AG04450 (cell line): ENCODE measurements at regions of chr12 and their contacts with region 1.

Region 1: DNA sequence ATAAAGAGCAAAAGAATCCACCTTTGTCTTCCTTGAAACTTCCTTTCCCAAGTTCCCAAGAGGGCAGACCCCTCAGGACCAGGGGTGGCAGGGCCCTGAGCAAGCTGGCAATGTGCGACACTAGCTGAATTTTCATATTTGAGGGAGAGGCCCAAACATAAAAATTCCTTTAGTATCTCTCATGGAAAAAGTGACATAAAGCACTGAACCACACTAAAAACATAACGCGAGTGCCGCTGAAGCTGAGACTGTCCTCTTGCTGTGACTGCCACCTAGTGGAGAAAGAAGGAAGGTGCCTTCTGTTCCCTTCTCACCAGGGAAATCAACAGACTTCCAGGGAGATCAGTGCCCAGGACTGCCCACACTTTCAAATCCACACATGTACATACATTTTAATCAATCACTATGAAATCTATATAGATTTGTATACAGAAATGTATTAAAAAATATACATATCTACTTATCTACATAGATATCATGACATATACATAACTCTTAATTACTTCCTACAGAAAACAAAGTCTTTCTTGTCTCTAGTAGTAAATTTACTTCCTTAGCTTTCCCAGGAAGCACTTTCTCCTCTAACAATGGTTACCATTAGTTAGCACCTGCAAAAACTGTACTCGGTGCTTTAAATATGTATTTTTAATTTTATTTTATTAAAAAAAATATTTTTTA is 53.8 kb downstream of the SSH1 start:
- DNase-seq: peak; percentile 85
- H3K4me3 ChIP-seq: no peak overlapping the region
- H3K27ac ChIP-seq: peak overlapping the region; percentile 99
- H3K27me3 ChIP-seq: no peaks in the 10 kb centered on the region
- CTCF ChIP-seq: peak; percentile 96

Region 2: GRCh38 chr12:108241986-108242703 is 561.4 kb before region 1 on chr12:
- CTCF ChIA-PET with region 1: no interaction called
- POLR2A ChIA-PET with region 1: no interaction called
- DNase-seq: no peak
- H3K4me3 ChIP-seq: no peak overlapping the region
- H3K27ac ChIP-seq: no peak overlapping the region
- H3K27me3 ChIP-seq: no peaks in the 10 kb centered on the region
- CTCF ChIP-seq: no peak

Region 3: DNA sequence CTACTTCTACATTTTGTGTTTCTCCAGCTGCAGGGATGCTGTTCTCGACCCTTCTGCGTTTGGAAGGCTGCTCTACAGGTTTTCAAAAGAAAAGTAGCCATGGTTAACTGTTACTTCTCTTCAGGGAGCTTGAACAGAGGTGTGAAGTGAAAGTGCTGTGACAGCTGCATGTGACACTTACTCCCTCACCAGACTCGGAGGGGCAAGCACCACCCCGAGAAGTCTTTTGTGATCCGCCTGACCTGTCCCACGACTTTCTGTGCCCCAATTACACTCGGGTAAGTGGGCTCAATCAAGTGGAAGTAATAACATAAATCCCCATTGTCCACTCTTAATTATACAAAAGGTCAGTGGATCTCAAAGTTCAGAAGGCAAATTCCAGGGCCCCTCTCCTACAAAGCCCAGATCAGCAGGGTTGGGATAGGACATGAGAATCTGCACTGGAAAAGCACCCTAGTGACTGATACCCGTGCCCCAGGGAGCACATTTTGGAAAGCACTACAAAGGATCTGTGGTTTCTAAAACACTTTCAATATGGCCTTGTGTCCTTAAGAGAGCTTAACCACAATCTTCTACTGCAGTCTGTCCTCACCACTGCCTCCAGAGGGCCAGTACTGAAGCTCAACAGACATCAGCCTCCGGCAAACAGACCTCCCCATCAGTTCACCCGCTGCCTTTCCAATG is 276.9 kb before region 1 on chr12:
- CTCF ChIA-PET with region 1: no interaction called
- POLR2A ChIA-PET with region 1: no interaction called
- DNase-seq: no peak
- H3K4me3 ChIP-seq: no peak overlapping the region
- H3K27ac ChIP-seq: peak overlapping the region; percentile 39
- H3K27me3 ChIP-seq: no peaks in the 10 kb centered on the region
- CTCF ChIP-seq: 0 out of 2 replicates have a peak, but pooled peaks have one; percentile 28

Region 4: GRCh38 chr12:108570743-108571608 is 232.6 kb before region 1 on chr12:
- CTCF ChIA-PET with region 1: interaction called, 25 read pairs
- POLR2A ChIA-PET with region 1: no interaction called
- DNase-seq: no peak
- H3K4me3 ChIP-seq: no peak overlapping the region
- H3K27ac ChIP-seq: peak overlapping the region; percentile 21
- H3K27me3 ChIP-seq: no peaks in the 10 kb centered on the region
- CTCF ChIP-seq: peak; percentile 59

Region 5: GRCh38 chr12:108649669-108650068 is 153.9 kb before region 1 on chr12:
- CTCF ChIA-PET with region 1: interaction called, 15 read pairs
- POLR2A ChIA-PET with region 1: interaction called, 5 read pairs
- DNase-seq: peak; percentile 78
- H3K4me3 ChIP-seq: no peak overlapping the region
- H3K27ac ChIP-seq: peak overlapping the region; percentile 68
- H3K27me3 ChIP-seq: no peaks in the 10 kb centered on the region
- CTCF ChIP-seq: no peak

Region 6: DNA sequence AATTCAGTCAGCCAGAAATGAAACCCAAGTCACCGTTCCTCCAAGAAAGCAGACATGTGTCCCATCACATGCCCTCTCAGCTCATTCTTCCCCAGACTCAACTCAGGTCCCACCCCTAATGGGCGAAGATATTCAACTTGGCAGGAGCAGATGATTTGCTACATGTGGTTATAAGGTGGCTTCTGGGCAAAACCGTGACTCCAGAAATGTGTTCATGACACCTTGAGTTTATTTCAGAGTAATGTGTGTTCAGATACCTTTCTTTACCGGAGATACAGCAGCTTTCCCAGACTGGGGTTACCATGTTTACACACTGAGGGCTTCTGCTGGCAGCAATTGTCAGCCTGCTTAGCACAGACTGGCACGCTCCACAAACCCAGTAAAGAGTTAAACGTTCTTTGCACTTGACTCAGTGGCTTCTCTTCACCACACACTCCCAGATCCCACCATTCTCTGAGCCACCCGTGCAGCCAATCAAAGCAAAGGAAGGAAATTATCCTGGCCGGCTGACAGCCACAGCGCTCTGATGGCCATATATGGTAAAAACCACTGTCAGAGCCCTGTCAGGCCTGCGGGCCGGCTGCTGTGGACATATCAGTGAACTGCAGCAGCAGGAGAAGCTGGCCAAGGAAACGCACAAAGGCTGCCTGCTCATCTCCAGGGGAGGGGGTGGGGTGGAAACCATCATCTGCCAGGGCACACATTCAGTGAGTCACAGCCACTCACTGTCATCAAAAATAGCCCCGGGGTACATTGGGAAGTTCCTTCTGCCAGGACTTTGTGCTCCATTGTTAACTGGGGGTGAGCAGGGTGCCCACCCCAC is 112.2 kb before region 1 on chr12:
- CTCF ChIA-PET with region 1: interaction called, 16 read pairs
- POLR2A ChIA-PET with region 1: interaction called, 6 read pairs
- DNase-seq: peak; percentile 99
- H3K4me3 ChIP-seq: peak overlapping the region; percentile 46
- H3K27ac ChIP-seq: peak overlapping the region; percentile 100
- H3K27me3 ChIP-seq: no peaks in the 10 kb centered on the region
- CTCF ChIP-seq: peak; percentile 31

Region 7: GRCh38 chr12:108826101-108826806 is 22.7 kb after region 1 on chr12:
- CTCF ChIA-PET with region 1: interaction called, 27 read pairs
- POLR2A ChIA-PET with region 1: interaction called, 29 read pairs
- DNase-seq: peak; percentile 83
- H3K4me3 ChIP-seq: peak overlapping the region; percentile 47
- H3K27ac ChIP-seq: peak overlapping the region; percentile 100
- H3K27me3 ChIP-seq: no peaks in the 10 kb centered on the region
- CTCF ChIP-seq: peak; percentile 20; the same call in 1 of the 2 replicates

Region 8: DNA sequence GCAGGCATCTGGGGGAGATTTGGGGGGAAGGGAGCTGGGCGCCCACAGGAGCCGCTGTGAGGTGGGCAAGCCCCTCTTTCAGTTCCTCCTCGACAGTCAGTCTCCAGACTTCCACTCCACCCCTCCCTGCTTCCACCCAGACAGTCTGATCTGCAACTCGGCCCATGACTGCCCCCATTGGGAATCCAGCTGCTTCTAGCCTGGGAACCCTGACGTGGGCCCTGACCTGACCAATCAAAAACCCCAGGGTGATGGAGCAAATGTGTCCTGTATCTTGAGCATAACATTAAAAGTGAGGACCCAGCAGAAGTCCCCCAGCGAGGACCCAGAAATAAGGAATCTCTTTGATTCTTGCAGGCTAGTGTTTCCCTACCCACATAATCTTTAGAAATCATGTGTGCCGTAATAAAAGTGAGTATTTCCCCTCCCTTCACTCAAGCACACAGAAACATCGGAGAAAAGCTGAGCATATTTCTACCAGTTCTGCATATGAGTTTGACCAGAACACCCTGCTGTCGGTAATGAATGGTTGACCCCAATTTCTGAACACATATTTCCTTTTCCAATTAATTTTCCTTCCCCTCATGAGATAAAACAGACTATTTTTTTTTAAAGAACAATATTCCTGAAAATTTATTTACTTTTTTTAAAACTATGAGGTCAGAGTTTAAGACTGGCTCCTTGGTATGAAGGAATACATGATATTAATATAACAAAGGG is 47.4 kb after region 1 on chr12:
- CTCF ChIA-PET with region 1: interaction called, 12 read pairs
- POLR2A ChIA-PET with region 1: interaction called, 4 read pairs
- DNase-seq: no peak
- H3K4me3 ChIP-seq: no peak overlapping the region
- H3K27ac ChIP-seq: peak overlapping the region; percentile 49
- H3K27me3 ChIP-seq: no peaks in the 10 kb centered on the region
- CTCF ChIP-seq: peak; percentile 21; the same call in 1 of the 2 replicates

Region 9: DNA sequence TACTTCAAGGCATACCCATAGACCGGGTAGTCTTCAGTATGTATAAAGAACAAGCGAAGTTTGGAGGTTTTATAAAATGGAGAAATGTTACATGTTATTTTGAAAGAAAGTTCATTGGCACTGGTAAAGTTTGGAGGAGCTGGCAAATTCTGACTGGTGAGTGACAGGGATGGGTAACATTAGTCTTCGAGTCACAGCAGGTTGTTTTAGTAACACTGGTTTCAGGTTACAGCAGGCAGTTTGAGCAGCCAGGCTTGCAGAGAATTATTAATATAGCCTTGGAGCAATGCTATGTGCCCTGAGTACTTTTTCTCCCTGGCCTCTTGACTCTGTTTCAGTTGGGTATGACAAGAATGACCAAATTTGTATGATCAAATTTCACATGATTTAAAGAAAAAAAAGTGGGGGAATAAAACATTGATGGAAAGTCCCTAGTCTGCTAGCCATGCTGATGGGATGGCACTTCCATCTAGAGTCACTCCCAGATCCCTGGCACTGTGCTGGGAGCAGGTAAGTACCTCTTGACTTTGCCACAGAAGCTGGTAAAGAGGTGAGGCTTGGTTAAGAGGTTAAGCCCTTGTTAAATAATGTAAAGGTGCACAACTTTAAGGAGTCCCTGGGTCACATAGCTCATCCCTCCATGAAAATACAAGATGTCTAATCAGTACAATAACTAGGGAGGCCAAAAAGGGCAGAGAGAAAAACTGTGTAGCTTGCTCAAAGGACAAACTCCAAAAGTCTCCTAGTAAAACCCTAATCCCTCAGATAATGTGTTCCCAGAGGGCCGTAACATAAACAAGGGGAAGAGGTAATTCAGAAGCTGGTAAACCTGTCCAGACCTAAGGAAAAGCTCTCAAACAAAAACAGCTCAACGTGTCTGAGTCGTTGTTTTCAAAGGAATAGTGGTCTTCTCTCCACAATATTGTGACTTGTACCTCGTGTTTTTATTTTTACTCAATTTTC is 229.9 kb after region 1 on chr12:
- CTCF ChIA-PET with region 1: no interaction called
- POLR2A ChIA-PET with region 1: no interaction called
- DNase-seq: no peak
- H3K4me3 ChIP-seq: no peak overlapping the region
- H3K27ac ChIP-seq: no peak overlapping the region
- H3K27me3 ChIP-seq: peaks cover 4% of the 10 kb centered on the region
- CTCF ChIP-seq: no peak